Natural killer cell (primary cell): ENCODE measurements at regions of chr3 and their contacts with region 1.

Region 1: GRCh38 chr3:129249276-129250065 is at the start of gene COPG1:
- DNase-seq: peak; percentile 90 to 95
- ATAC-seq: peak; percentile 74 to 87 (median 85)
- H3K4me3 ChIP-seq: peak within 1 kb of the TSS; percentile 87
- H3K4me3 Mint-ChIP-seq: peak within 1 kb of the TSS; percentile 97
- H3K27ac ChIP-seq: peak within 1 kb of the TSS; percentile 80
- H3K27ac Mint-ChIP-seq: peak within 1 kb of the TSS; percentile 95 to 98
- H3K4me1 ChIP-seq: peaks cover 27% of the 10 kb centered on the region
- H3K4me1 Mint-ChIP-seq: peaks cover 46 to 49% of the 10 kb centered on the region in 2 donors
- H3K27me3 ChIP-seq: no peaks in the 10 kb centered on the region
- H3K27me3 Mint-ChIP-seq: no peaks in the 10 kb centered on the region
- CTCF ChIP-seq: no peak
- total RNA-seq, gene COPG1: 127 to 141 (median 135) TPM

Region 2: GRCh38 chr3:128617557-128618397 is 631.7 kb before region 1 on chr3:
- intact Hi-C with region 1: loop called (anchors 10 kb)
- DNase-seq: peak; percentile 99 to 100
- ATAC-seq: peak; percentile 91 to 97 (median 93)
- H3K4me3 ChIP-seq: peak overlapping the region; percentile 90
- H3K4me3 Mint-ChIP-seq: peak overlapping the region; percentile 98
- H3K27ac ChIP-seq: peak overlapping the region; percentile 93
- H3K27ac Mint-ChIP-seq: peak overlapping the region; percentile 91 to 97
- H3K4me1 ChIP-seq: peaks cover 22% of the 10 kb centered on the region
- H3K4me1 Mint-ChIP-seq: peaks cover 25 to 49% of the 10 kb centered on the region in 2 donors
- H3K27me3 ChIP-seq: no peaks in the 10 kb centered on the region
- H3K27me3 Mint-ChIP-seq: no peaks in the 10 kb centered on the region
- CTCF ChIP-seq: peak; percentile 99

Region 3: GRCh38 chr3:128969993-128970739 is 279.3 kb before region 1 on chr3:
- intact Hi-C with region 1: loop called (anchors 1 kb)
- DNase-seq: peak; percentile 47 to 85
- ATAC-seq: peak; percentile 77 to 89 (median 79)
- H3K4me3 ChIP-seq: no peak overlapping the region
- H3K4me3 Mint-ChIP-seq: no peak overlapping the region
- H3K27ac ChIP-seq: no peak overlapping the region
- H3K27ac Mint-ChIP-seq: peak overlapping the region in 1 of 2 donors; percentile 12
- H3K4me1 ChIP-seq: peaks cover 10% of the 10 kb centered on the region
- H3K4me1 Mint-ChIP-seq: no peaks in the 10 kb centered on the region
- H3K27me3 ChIP-seq: no peaks in the 10 kb centered on the region
- H3K27me3 Mint-ChIP-seq: no peaks in the 10 kb centered on the region
- CTCF ChIP-seq: peak; percentile 96

Region 4: GRCh38 chr3:129026728-129027543 is 222.5 kb before region 1 on chr3:
- intact Hi-C with region 1: loop called (anchors 5 kb)
- DNase-seq: peak; percentile 90 to 96
- ATAC-seq: peak; percentile 93 to 99 (median 95)
- H3K4me3 ChIP-seq: peak overlapping the region; percentile 52
- H3K4me3 Mint-ChIP-seq: peak overlapping the region; percentile 87
- H3K27ac ChIP-seq: peak overlapping the region; percentile 74
- H3K27ac Mint-ChIP-seq: peak overlapping the region; percentile 99 to 100
- H3K4me1 ChIP-seq: peaks cover 32% of the 10 kb centered on the region
- H3K4me1 Mint-ChIP-seq: peaks cover 25 to 35% of the 10 kb centered on the region in 2 donors
- H3K27me3 ChIP-seq: no peaks in the 10 kb centered on the region
- H3K27me3 Mint-ChIP-seq: no peaks in the 10 kb centered on the region
- CTCF ChIP-seq: peak; percentile 88

Region 5: GRCh38 chr3:129052675-129053074 is 196.8 kb before region 1 on chr3:
- intact Hi-C with region 1: loop called (anchors 1 kb)
- DNase-seq: no peak
- ATAC-seq: no peak
- H3K4me3 ChIP-seq: no peak overlapping the region
- H3K4me3 Mint-ChIP-seq: no peak overlapping the region
- H3K27ac ChIP-seq: no peak overlapping the region
- H3K27ac Mint-ChIP-seq: no peak overlapping the region
- H3K4me1 ChIP-seq: peaks cover 9% of the 10 kb centered on the region
- H3K4me1 Mint-ChIP-seq: peaks cover 8 to 9% of the 10 kb centered on the region in 2 donors
- H3K27me3 ChIP-seq: no peaks in the 10 kb centered on the region
- H3K27me3 Mint-ChIP-seq: no peaks in the 10 kb centered on the region
- CTCF ChIP-seq: no peak

Region 6: GRCh38 chr3:129120254-129121004 is 129.0 kb before region 1 on chr3:
- intact Hi-C with region 1: loop called (anchors 1 kb)
- DNase-seq: peak; percentile 82 to 96
- ATAC-seq: peak; percentile 71 to 86 (median 75)
- H3K4me3 ChIP-seq: peak overlapping the region; percentile 92
- H3K4me3 Mint-ChIP-seq: peak overlapping the region; percentile 87
- H3K27ac ChIP-seq: peak overlapping the region; percentile 88
- H3K27ac Mint-ChIP-seq: peak overlapping the region; percentile 74 to 87
- H3K4me1 ChIP-seq: peaks cover 57% of the 10 kb centered on the region
- H3K4me1 Mint-ChIP-seq: peaks cover 58 to 62% of the 10 kb centered on the region in 2 donors
- H3K27me3 ChIP-seq: no peaks in the 10 kb centered on the region
- H3K27me3 Mint-ChIP-seq: no peaks in the 10 kb centered on the region
- CTCF ChIP-seq: no peak

Region 7: GRCh38 chr3:129183569-129184395 is 65.7 kb before region 1 on chr3 and contains the start of gene CNBP:
- intact Hi-C with region 1: loop called (anchors 1 kb)
- DNase-seq: peak; percentile 95 to 96
- ATAC-seq: peak; percentile 95 to 100 (median 97)
- H3K4me3 ChIP-seq: peak within 1 kb of the TSS; percentile 95
- H3K4me3 Mint-ChIP-seq: peak within 1 kb of the TSS; percentile 91
- H3K27ac ChIP-seq: peak within 1 kb of the TSS; percentile 93
- H3K27ac Mint-ChIP-seq: peak within 1 kb of the TSS; percentile 84 to 100
- H3K4me1 ChIP-seq: peaks cover 42% of the 10 kb centered on the region
- H3K4me1 Mint-ChIP-seq: peaks cover 39 to 47% of the 10 kb centered on the region in 2 donors
- H3K27me3 ChIP-seq: no peaks in the 10 kb centered on the region
- H3K27me3 Mint-ChIP-seq: no peaks in the 10 kb centered on the region
- CTCF ChIP-seq: no peak
- total RNA-seq, gene CNBP: 202 to 223 (median 211) TPM

Region 8: DNA sequence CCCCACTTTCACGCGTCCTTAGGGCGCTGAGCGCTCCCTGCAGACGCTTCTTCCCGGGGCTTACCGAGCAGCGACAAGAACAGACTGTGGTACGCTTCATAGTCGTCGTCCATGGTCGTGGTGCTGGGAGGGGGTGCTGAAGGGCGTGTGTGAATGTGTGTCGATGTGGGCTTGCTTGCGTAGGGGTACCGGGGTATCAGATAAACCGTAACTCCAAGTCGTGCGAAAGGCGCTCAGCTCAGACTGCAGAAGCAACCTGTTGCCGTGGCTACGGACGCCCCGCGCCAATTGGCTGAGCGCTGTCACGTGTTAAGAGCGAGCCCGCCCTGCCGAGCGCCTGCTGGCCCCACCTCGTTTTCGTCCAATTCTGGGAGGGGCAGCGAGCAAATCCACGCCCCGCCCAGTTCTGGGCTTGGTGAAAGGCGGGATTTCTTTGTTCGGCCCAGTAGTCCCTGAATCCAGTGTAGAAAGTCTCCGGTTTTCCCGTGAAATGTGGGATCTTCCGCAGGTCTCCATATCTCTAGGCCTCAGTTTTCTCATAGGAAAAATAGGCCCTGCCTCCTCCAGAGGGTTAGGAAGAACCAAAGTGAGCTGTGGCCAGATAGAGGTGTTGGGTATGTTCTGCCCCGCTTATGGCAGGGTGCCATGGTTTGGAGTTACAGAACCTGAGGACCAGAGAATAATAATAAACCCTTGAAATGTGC is 179.1 kb after region 1 on chr3 and contains the start of gene EFCAB12:
- intact Hi-C with region 1: no loop called
- DNase-seq: peak; percentile 87 to 94
- ATAC-seq: peak; percentile 94 to 99 (median 98)
- H3K4me3 ChIP-seq: peak within 1 kb of the TSS; percentile 38
- H3K4me3 Mint-ChIP-seq: peak within 1 kb of the TSS; percentile 84
- H3K27ac ChIP-seq: peak within 1 kb of the TSS; percentile 1
- H3K27ac Mint-ChIP-seq: peak within 1 kb of the TSS; percentile 43 to 67
- H3K4me1 ChIP-seq: peaks cover 22% of the 10 kb centered on the region
- H3K4me1 Mint-ChIP-seq: peaks cover 26 to 38% of the 10 kb centered on the region in 2 donors
- H3K27me3 ChIP-seq: no peaks in the 10 kb centered on the region
- H3K27me3 Mint-ChIP-seq: no peaks in the 10 kb centered on the region
- CTCF ChIP-seq: no peak
- total RNA-seq, gene EFCAB12: 0.94 to 3.3 (median 1.4) TPM